Heart left ventricle (tissue), 16 donors: ENCODE measurements at regions of chr9 and their contacts with region 1.

Region 1: DNA sequence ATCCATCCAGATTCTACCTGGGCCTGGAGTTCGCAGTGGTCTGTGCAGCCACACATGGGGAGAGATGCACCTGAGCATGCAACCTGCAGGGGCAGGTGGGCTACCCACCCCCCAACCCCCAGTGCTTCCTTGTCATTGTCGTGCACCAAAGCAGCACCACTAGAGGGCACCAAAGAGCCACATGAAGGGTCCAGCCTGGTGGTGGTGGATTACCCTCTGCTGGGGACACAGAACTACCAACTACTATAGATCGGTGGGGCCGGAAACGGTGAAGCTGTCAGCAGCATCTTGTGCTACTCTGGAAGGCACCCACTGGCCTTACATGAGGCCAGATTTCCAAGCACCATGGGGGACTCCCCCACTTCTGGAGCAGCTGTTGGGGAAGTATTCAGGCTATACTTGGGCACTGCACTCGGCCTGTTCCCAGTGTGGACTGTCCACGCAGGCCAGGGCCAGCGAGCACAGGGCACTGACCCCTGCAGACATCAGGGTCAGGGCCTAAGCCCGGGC is 60.2 kb upstream of the TBC1D2 start:
- DNase-seq: peak; percentile 72 to 84 (median 74)
- ATAC-seq: peak; percentile 81 to 89 (median 87)
- H3K4me3 ChIP-seq: no peak overlapping the region
- H3K27ac ChIP-seq: no peak overlapping the region
- H3K4me1 ChIP-seq: peaks cover 0 to 3% (median 0%) of the 10 kb centered on the region in 12 donors
- H3K27me3 ChIP-seq: no peaks in the 10 kb centered on the region
- CTCF ChIP-seq: peak; percentile 79 to 92 (median 86)
- POLR2A ChIP-seq: no peak

Region 2: GRCh38 chr9:98365227-98365669 is 49.6 kb after region 1 on chr9:
- intact Hi-C with region 1: loop called in 1 of 10 experiments (anchors 5 kb)
- DNase-seq: no peak
- ATAC-seq: no peak
- H3K4me3 ChIP-seq: no peak overlapping the region
- H3K27ac ChIP-seq: no peak overlapping the region
- H3K4me1 ChIP-seq: no peaks in the 10 kb centered on the region
- H3K27me3 ChIP-seq: peaks cover 0 to 21% (median 0%) of the 10 kb centered on the region in 9 donors
- CTCF ChIP-seq: peak in 9 of 12 donors; percentile 10 to 46 (median 20)
- POLR2A ChIP-seq: no peak

Region 3: GRCh38 chr9:98383758-98384157 is 68.2 kb after region 1 on chr9:
- intact Hi-C with region 1: no loop called
- DNase-seq: no peak
- ATAC-seq: no peak
- H3K4me3 ChIP-seq: no peak overlapping the region
- H3K27ac ChIP-seq: no peak overlapping the region
- H3K4me1 ChIP-seq: peaks cover 0 to 4% (median 0%) of the 10 kb centered on the region in 12 donors
- H3K27me3 ChIP-seq: no peaks in the 10 kb centered on the region
- CTCF ChIP-seq: no peak
- POLR2A ChIP-seq: no peak

Region 4: GRCh38 chr9:98707166-98708102 is 391.8 kb after region 1 on chr9:
- intact Hi-C with region 1: loop called in 6 of 10 experiments (anchors 1 to 10 kb)
- DNase-seq: peak; percentile 33 to 72 (median 43)
- ATAC-seq: peak in 3 of 4 donors; percentile 72 to 82 (median 75)
- H3K4me3 ChIP-seq: peak overlapping the region; percentile 3 to 58 (median 26)
- H3K27ac ChIP-seq: no peak overlapping the region
- H3K4me1 ChIP-seq: peaks cover 0 to 28% (median 8%) of the 10 kb centered on the region in 12 donors
- H3K27me3 ChIP-seq: peaks cover 31 to 98% (median 66%) of the 10 kb centered on the region in 9 donors
- CTCF ChIP-seq: peak in 10 of 12 donors; percentile 16 to 60 (median 46)
- POLR2A ChIP-seq: no peak

Region 5: GRCh38 chr9:98775831-98776441 is 460.3 kb after region 1 on chr9:
- intact Hi-C with region 1: loop called (anchors 1 to 5 kb)
- DNase-seq: peak in 1 of 5 donors; percentile 35
- ATAC-seq: peak in 1 of 4 donors; percentile 49
- H3K4me3 ChIP-seq: no peak overlapping the region
- H3K27ac ChIP-seq: no peak overlapping the region
- H3K4me1 ChIP-seq: no peaks in the 10 kb centered on the region
- H3K27me3 ChIP-seq: no peaks in the 10 kb centered on the region
- CTCF ChIP-seq: peak; percentile 47 to 81 (median 69)
- POLR2A ChIP-seq: no peak

Region 6: GRCh38 chr9:98791147-98792095 is 475.8 kb after region 1 on chr9:
- intact Hi-C with region 1: loop called in 6 of 10 experiments (anchors 1 to 5 kb)
- DNase-seq: peak; percentile 68 to 84 (median 76)
- ATAC-seq: peak; percentile 68 to 91 (median 88)
- H3K4me3 ChIP-seq: no peak overlapping the region
- H3K27ac ChIP-seq: no peak overlapping the region
- H3K4me1 ChIP-seq: peaks cover 0 to 21% (median 13%) of the 10 kb centered on the region in 12 donors
- H3K27me3 ChIP-seq: no peaks in the 10 kb centered on the region
- CTCF ChIP-seq: peak; percentile 92 to 99 (median 98)
- POLR2A ChIP-seq: no peak